ENCODE measurements at regions of chr11 and their contacts with region 1.

Region 1: GRCh38 chr11:66429983-66430602 is 8.6 kb downstream of the MRPL11 start:
- DNase-seq: peak; percentile 73 to 84 (median 75)
- ATAC-seq: peak; percentile 97
- H3K4me3 ChIP-seq: no peak overlapping the region
- H3K27ac ChIP-seq: no peak overlapping the region
- H3K4me1 ChIP-seq: peaks cover 3 to 5% of the 10 kb centered on the region in 2 experiments; a peak in 3 of 5 replicates
- H3K27me3 ChIP-seq: no peaks in the 10 kb centered on the region
- CTCF ChIP-seq: peak; percentile 88 to 91 (median 91)
- EP300 ChIP-seq: no peak
- POLR2A ChIP-seq: no peak
- RAD21 ChIP-seq: peak; percentile 64 to 76

Region 2: DNA sequence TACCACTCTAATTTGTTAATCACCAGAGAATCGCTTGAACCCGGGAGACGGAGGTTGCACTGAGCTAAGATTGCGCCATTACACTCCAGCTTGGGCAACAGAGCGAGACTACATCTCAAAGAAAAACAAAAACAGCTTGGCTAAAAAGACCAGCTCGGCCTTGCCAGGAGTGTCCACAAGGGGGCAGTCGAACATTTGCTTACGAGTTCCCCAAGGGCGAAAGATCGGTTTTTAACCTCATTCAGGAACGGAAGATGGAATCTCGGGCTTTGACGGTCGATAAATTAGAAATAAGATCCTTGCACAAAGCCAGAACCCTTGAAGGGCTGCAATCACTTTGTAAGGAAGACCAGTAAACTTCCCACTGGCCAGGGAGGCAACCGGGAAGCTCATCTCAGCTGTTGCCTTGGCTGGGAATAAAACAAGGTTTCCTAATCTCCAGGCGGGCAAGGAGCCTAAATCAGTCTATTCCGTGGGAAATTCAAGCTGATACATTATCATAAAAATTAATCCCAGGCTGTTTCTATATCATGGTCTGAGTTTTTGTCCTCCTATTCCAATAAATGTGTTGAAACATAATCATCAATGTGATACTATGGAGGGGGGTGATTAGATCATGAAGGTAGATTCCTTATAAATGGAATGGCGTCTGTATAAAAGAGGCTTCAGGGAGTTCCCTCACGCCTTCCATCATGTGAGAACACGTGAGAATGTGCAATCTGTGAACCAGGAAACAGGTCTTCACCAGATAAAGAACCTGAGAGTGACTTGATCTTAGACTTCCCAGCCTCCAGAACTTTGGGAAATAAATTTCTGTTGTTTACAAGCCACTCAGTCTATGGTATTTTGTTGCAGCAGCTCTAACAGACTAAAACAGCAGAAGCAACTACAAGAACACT is 43.7 kb before region 1 on chr11:
- CTCF ChIA-PET with region 1: interaction called, 7 read pairs
- POLR2A ChIA-PET with region 1: interaction called, 4 read pairs
- in situ Hi-C with region 1: no loop called
- intact Hi-C with region 1: loop called (anchors 1 kb)
- DNase-seq: peak; percentile 55 to 90 (median 62)
- ATAC-seq: peak; percentile 87
- H3K4me3 ChIP-seq: no peak overlapping the region; the same call in 1 of the 2 replicates
- H3K27ac ChIP-seq: no peak overlapping the region
- H3K4me1 ChIP-seq: peaks cover 0 to 5% of the 10 kb centered on the region in 2 experiments; a peak in 2 of 5 replicates
- H3K27me3 ChIP-seq: peaks cover 0 to 7% of the 10 kb centered on the region in 2 experiments; a peak in 2 of 5 replicates
- CTCF ChIP-seq: peak; percentile 85 to 95 (median 94)
- EP300 ChIP-seq: no peak
- POLR2A ChIP-seq: no peak
- RAD21 ChIP-seq: peak; percentile 64 to 78

Region 3: GRCh38 chr11:66607126-66607834 is 177.2 kb after region 1 on chr11:
- CTCF ChIA-PET with region 1: no interaction called
- POLR2A ChIA-PET with region 1: no interaction called
- in situ Hi-C with region 1: no loop called
- intact Hi-C with region 1: no loop called
- DNase-seq: no peak
- ATAC-seq: no peak
- H3K4me3 ChIP-seq: no peak overlapping the region
- H3K27ac ChIP-seq: no peak overlapping the region
- H3K4me1 ChIP-seq: peaks cover 3 to 12% of the 10 kb centered on the region in 2 experiments; a peak in 4 of 5 replicates
- H3K27me3 ChIP-seq: no peaks in the 10 kb centered on the region
- CTCF ChIP-seq: no peak
- EP300 ChIP-seq: no peak
- POLR2A ChIP-seq: no peak
- RAD21 ChIP-seq: no peak